AG04449 (cell line): ENCODE measurements at regions of chr10 and their contacts with region 1.

Region 1: GRCh38 chr10:30591249-30591670 is 38.3 kb downstream of the LYZL2 start:
- DNase-seq: no peak
- H3K4me3 ChIP-seq: no peak overlapping the region
- CTCF ChIP-seq: peak; percentile 67

Region 2: GRCh38 chr10:30270247-30270646 is 321.0 kb before region 1 on chr10:
- CTCF ChIA-PET with region 1: interaction called, 20 read pairs
- POLR2A ChIA-PET with region 1: no interaction called
- DNase-seq: no peak
- H3K4me3 ChIP-seq: no peak overlapping the region
- CTCF ChIP-seq: no peak

Region 3: DNA sequence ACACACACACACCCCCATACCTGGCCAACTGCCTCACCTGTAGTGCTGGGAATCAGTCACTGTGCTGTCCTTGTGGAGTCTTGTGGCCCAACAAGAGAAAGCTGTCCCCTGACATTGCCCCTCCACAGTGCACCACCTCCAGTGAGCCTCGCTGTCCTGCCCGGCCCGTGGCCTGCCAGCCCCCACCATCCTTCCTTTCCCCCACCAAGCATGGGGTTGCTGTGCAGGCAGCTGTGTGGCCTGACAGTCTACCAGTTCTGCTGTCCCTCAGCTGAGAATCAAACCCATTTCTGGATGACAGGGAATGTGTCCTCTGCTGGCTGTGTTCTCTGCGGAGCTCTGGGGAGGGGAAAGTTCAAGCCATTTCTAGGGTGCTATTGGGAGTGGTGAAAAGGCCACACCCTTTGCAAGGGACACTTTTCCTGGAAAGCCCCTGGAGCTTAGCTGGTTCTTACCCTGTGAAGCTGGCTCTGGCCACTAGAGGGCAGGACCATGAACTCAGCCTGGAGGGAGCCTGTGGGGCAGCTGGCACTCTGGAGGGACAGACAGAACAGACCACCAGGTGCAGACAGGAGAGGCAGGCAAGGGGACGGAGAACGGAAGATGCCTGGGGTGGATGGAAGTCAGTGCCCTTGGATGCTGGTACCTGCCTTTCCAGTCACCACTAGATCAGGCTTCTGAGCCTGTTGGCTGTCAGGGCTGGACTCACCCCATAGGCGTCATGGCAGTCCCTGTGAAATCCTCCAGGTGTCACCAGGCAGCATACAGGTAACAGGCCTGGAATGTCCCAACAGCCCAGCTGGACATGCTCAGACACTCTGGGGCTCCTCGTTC is 231.7 kb before region 1 on chr10:
- CTCF ChIA-PET with region 1: interaction called, 28 read pairs
- POLR2A ChIA-PET with region 1: no interaction called
- DNase-seq: no peak
- H3K4me3 ChIP-seq: no peak overlapping the region
- CTCF ChIP-seq: peak; percentile 90

Region 4: DNA sequence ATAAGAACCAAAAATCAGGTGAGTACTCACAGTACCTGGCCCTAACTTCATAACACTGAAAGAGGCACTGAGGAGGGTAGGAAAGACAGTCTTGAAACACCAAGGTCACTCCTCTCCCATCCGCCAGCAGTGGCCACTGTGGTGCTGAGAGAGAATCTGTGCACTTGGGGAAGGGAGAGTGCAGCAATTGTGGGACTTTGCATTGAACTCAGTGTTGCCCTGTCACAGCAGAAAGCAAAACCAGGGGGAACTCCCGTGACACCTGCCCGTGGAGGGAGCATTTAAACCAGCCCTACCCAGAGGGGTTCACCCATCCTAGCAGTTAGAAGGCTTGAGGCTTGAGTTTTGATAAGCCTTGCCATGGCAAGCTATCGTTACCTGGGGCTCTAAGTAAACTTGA is 192.5 kb before region 1 on chr10:
- CTCF ChIA-PET with region 1: interaction called, 222 read pairs
- POLR2A ChIA-PET with region 1: no interaction called
- DNase-seq: no peak
- H3K4me3 ChIP-seq: no peak overlapping the region
- CTCF ChIP-seq: peak; percentile 7

Region 5: DNA sequence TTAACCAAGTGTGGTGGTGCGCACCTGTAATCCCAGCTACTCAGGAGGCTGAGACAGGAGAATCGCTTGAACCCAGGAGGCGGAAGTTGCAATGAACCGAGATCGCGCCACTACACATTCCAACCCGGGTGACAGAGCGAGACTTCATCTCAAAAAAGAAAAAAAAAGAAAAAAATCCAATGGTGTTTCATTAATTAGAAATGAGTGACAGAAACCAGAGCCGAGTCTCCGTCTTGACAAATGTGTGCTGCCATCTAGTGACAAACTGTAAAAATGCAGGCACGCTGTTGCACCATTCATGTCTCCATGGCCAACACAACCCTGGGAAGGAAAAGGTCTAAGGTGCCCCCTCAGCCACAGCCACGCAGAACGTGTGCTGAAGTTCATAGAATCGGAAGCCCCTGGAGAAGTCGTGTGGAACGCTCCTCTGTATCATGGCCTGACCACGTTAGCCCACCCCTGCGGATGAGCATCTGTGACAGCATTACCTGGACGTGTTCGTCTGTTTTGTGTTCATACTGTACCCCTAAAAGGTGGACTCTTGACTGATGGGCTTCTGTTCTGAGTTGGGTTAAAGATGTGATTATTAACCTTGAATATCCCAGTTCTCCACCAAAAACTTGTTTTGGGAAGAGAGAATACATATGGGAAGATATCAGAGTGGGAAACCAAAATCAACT is 56.7 kb before region 1 on chr10:
- CTCF ChIA-PET with region 1: interaction called, 25 read pairs
- POLR2A ChIA-PET with region 1: no interaction called
- DNase-seq: no peak
- H3K4me3 ChIP-seq: no peak overlapping the region
- CTCF ChIP-seq: peak; percentile 79

Region 6: GRCh38 chr10:30639946-30640786 is 48.9 kb after region 1 on chr10:
- CTCF ChIA-PET with region 1: interaction called, 10 read pairs
- POLR2A ChIA-PET with region 1: no interaction called
- DNase-seq: no peak
- H3K4me3 ChIP-seq: no peak overlapping the region
- CTCF ChIP-seq: peak; percentile 71